Naive thymus-derived CD4-positive, alpha-beta T cell (primary cell): ENCODE measurements at regions of chr17 and their contacts with region 1.

Region 1: DNA sequence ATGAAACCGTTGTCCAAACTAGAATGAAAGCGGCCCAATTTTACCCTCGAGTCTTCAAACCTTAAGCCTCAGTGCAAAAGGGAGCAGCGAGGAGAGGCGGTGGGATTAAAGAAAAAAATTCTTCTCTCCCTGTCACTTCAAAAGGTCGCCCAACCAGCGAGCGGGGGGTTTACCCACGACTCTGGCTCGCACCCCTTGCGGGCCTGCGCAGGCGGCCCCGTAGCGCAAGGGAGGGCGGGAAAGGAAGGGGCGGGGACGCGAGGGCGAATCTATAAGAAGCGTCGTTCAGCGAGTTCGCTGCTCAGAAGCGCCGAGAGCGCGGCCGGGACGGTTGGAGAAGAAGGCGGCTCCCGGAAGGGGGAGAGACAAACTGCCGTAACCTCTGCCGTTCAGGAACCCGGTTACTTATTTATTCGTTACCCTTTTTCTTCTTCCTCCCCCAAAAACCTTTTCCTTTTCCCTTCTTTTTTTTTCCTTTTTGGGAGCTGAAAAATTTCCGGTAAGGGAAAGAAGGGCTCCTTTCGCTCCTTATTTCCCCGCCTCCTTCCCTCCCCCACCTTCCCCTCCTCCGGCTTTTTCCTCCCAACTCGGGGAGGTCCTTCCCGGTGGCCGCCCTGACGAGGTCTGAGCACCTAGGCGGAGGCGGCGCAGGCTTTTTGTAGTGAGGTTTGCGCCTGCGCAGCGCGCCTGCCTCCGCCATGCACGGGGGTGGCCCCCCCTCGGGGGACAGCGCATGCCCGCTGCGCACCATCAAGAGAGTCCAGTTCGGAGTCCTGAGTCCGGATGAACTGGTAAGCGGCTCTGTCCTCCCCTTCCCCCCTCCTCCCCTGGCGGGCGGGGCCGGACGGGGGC is at the start of gene POLR2A:
- DNase-seq: peak; percentile 97 to 99 (median 99)
- ATAC-seq: peak; percentile 80
- H3K4me3 ChIP-seq: peak within 1 kb of the TSS; percentile 100
- H3K4me3 Mint-ChIP-seq: peak within 1 kb of the TSS; percentile 86 to 100 (median 98)
- H3K27ac ChIP-seq: peak within 1 kb of the TSS; percentile 97
- H3K27ac Mint-ChIP-seq: peak within 1 kb of the TSS; percentile 99 to 100 (median 100)
- H3K4me1 ChIP-seq: peaks cover 38 to 55% of the 10 kb centered on the region in 2 donors
- H3K4me1 Mint-ChIP-seq: peaks cover 60 to 81% (median 72%) of the 10 kb centered on the region in 7 donors
- H3K27me3 ChIP-seq: no peaks in the 10 kb centered on the region
- H3K27me3 Mint-ChIP-seq: no peaks in the 10 kb centered on the region
- total RNA-seq, gene POLR2A: 165 to 501 (median 225) TPM

Region 2: DNA sequence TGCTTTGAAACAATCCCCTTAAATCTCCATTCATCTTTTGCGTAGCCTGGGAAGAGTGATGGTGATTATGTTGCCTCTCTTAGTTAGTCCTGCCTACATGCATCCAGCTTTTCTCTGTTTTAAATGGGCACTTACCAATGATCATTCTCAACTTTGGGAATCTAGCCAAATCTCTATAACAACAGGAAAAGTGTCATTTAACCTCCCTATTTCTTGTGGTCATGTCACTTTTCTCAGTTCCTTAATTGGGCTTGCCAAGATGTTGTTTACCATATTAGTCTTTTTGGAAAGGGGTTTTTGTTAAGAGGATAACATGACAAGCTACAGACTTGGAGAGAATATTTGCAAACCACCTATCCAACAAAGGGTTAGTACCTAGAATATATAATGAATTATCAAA is 388.7 kb before region 1 on chr17:
- CTCF ChIA-PET with region 1: no interaction called
- POLR2A ChIA-PET with region 1: no interaction called
- intact Hi-C with region 1: no loop called
- DNase-seq: no peak
- ATAC-seq: peak; percentile 38
- H3K4me3 ChIP-seq: no peak overlapping the region
- H3K4me3 Mint-ChIP-seq: no peak overlapping the region
- H3K27ac ChIP-seq: no peak overlapping the region
- H3K27ac Mint-ChIP-seq: peak overlapping the region in 1 of 9 donors; percentile 11
- H3K4me1 ChIP-seq: no peaks in the 10 kb centered on the region
- H3K4me1 Mint-ChIP-seq: peaks cover 0 to 17% (median 8%) of the 10 kb centered on the region in 7 donors
- H3K27me3 ChIP-seq: no peaks in the 10 kb centered on the region
- H3K27me3 Mint-ChIP-seq: peaks cover 0 to 11% (median 5%) of the 10 kb centered on the region in 5 donors

Region 3: GRCh38 chr17:7214300-7215135 is 269.8 kb before region 1 on chr17:
- CTCF ChIA-PET with region 1: no interaction called
- POLR2A ChIA-PET with region 1: interaction called, 4 read pairs
- intact Hi-C with region 1: loop called in 1 of 2 experiments (anchors 2 kb)
- DNase-seq: peak; percentile 96 to 99 (median 97)
- ATAC-seq: peak; percentile 90
- H3K4me3 ChIP-seq: peak overlapping the region; percentile 61
- H3K4me3 Mint-ChIP-seq: peak overlapping the region; percentile 76 to 97 (median 94)
- H3K27ac ChIP-seq: peak overlapping the region; percentile 97
- H3K27ac Mint-ChIP-seq: peak overlapping the region; percentile 90 to 100 (median 99)
- H3K4me1 ChIP-seq: peaks cover 25 to 49% of the 10 kb centered on the region in 2 donors
- H3K4me1 Mint-ChIP-seq: peaks cover 36 to 69% (median 65%) of the 10 kb centered on the region in 7 donors
- H3K27me3 ChIP-seq: no peaks in the 10 kb centered on the region
- H3K27me3 Mint-ChIP-seq: peaks cover 0 to 16% (median 0%) of the 10 kb centered on the region in 5 donors

Region 4: GRCh38 chr17:7351665-7352501 is 132.4 kb before region 1 on chr17 and contains the start of gene KCTD11:
- CTCF ChIA-PET with region 1: interaction called, 6 read pairs
- POLR2A ChIA-PET with region 1: interaction called, 14 read pairs
- intact Hi-C with region 1: loop called (anchors 1 to 10 kb)
- DNase-seq: peak; percentile 40 to 88 (median 58)
- ATAC-seq: peak; percentile 72
- H3K4me3 ChIP-seq: peak within 1 kb of the TSS; percentile 57
- H3K4me3 Mint-ChIP-seq: peak within 1 kb of the TSS; percentile 78 to 94 (median 88)
- H3K27ac ChIP-seq: peak within 1 kb of the TSS; percentile 74
- H3K27ac Mint-ChIP-seq: peak within 1 kb of the TSS; percentile 72 to 91 (median 86)
- H3K4me1 ChIP-seq: peaks cover 10 to 27% of the 10 kb centered on the region in 2 donors
- H3K4me1 Mint-ChIP-seq: peaks cover 14 to 62% (median 43%) of the 10 kb centered on the region in 7 donors
- H3K27me3 ChIP-seq: no peaks in the 10 kb centered on the region
- H3K27me3 Mint-ChIP-seq: no peaks in the 10 kb centered on the region
- total RNA-seq, gene KCTD11: 2.7 to 13.7 (median 4.0) TPM

Region 5: GRCh38 chr17:7444682-7445618 is 39.3 kb before region 1 on chr17 and contains the start of gene CHRNB1:
- CTCF ChIA-PET with region 1: interaction called, 3 read pairs
- POLR2A ChIA-PET with region 1: interaction called, 35 read pairs
- intact Hi-C with region 1: no loop called
- DNase-seq: peak in 2 of 9 donors; percentile 23 to 49
- ATAC-seq: peak; percentile 74
- H3K4me3 ChIP-seq: peak within 1 kb of the TSS; percentile 30
- H3K4me3 Mint-ChIP-seq: peak within 1 kb of the TSS; percentile 75 to 89 (median 84)
- H3K27ac ChIP-seq: no peak within 1 kb of the TSS
- H3K27ac Mint-ChIP-seq: peak within 1 kb of the TSS in 5 of 9 donors; percentile 26 to 90 (median 39)
- H3K4me1 ChIP-seq: peaks cover 4 to 28% of the 10 kb centered on the region in 2 donors
- H3K4me1 Mint-ChIP-seq: peaks cover 23 to 39% (median 32%) of the 10 kb centered on the region in 7 donors
- H3K27me3 ChIP-seq: peaks cover 9 to 34% of the 10 kb centered on the region in 2 donors
- H3K27me3 Mint-ChIP-seq: peaks cover 44 to 68% (median 58%) of the 10 kb centered on the region in 5 donors
- total RNA-seq, gene CHRNB1: 6.0 to 14.6 (median 7.2) TPM

Region 6: DNA sequence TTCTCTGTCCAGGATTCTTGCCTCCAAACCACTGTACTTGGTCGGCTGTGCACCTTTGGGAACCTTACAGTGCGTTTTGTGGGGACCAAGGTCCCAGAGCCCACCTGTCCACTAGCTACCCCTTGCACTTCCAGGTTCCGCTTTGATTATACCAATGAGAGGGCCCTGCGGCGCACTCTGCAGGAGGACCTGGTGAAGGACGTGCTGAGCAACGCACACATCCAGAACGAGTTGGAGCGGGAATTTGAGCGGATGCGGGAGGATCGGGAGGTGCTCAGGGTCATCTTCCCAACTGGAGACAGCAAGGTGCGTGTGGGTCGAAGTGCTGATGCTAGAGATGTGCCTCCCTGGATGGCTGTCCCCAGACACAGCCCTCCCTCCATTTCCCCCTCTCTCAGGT is 18.7 kb after region 1 on chr17:
- CTCF ChIA-PET with region 1: no interaction called
- POLR2A ChIA-PET with region 1: interaction called, 19 read pairs
- intact Hi-C with region 1: no loop called
- DNase-seq: peak in 2 of 9 donors; percentile 17 to 27
- ATAC-seq: peak; percentile 43
- H3K4me3 ChIP-seq: no peak overlapping the region
- H3K4me3 Mint-ChIP-seq: no peak overlapping the region
- H3K27ac ChIP-seq: no peak overlapping the region
- H3K27ac Mint-ChIP-seq: no peak overlapping the region
- H3K4me1 ChIP-seq: no peaks in the 10 kb centered on the region
- H3K4me1 Mint-ChIP-seq: peaks cover 0 to 3% (median 0%) of the 10 kb centered on the region in 7 donors
- H3K27me3 ChIP-seq: no peaks in the 10 kb centered on the region
- H3K27me3 Mint-ChIP-seq: no peaks in the 10 kb centered on the region

Region 7: GRCh38 chr17:7614422-7615264 is 130.3 kb after region 1 on chr17 and contains the start of gene FXR2:
- CTCF ChIA-PET with region 1: interaction called, 3 read pairs
- POLR2A ChIA-PET with region 1: interaction called, 4 read pairs
- intact Hi-C with region 1: loop called in 1 of 2 experiments (anchors 1 kb)
- DNase-seq: peak; percentile 96 to 100 (median 99)
- ATAC-seq: peak; percentile 93
- H3K4me3 ChIP-seq: peak within 1 kb of the TSS; percentile 86
- H3K4me3 Mint-ChIP-seq: peak within 1 kb of the TSS; percentile 85 to 97 (median 92)
- H3K27ac ChIP-seq: peak within 1 kb of the TSS; percentile 81
- H3K27ac Mint-ChIP-seq: peak within 1 kb of the TSS; percentile 89 to 99 (median 97)
- H3K4me1 ChIP-seq: peaks cover 16 to 27% of the 10 kb centered on the region in 2 donors
- H3K4me1 Mint-ChIP-seq: peaks cover 29 to 47% (median 40%) of the 10 kb centered on the region in 7 donors
- H3K27me3 ChIP-seq: no peaks in the 10 kb centered on the region
- H3K27me3 Mint-ChIP-seq: peaks cover 0 to 6% (median 0%) of the 10 kb centered on the region in 5 donors
- total RNA-seq, gene FXR2: 24.6 to 46.9 (median 34.0) TPM

Region 8: DNA sequence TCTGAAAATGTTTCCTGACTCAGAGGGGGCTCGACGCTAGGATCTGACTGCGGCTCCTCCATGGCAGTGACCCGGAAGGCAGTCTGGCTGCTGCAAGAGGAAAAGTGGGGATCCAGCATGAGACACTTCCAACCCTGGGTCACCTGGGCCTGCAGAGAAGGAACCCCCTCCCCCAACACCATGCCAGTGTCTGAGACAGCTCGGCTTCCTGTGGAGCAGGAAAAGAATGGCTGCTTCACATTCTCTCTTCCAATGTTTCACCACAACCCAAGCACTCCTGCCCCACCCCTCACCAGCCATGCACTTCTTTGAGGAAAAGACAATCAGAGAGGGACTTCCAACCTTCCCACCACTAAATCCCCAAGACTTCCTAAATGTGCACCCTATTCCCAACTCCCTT is 192.2 kb after region 1 on chr17:
- CTCF ChIA-PET with region 1: no interaction called
- POLR2A ChIA-PET with region 1: no interaction called
- intact Hi-C with region 1: no loop called
- DNase-seq: no peak
- ATAC-seq: no peak
- H3K4me3 ChIP-seq: no peak overlapping the region
- H3K4me3 Mint-ChIP-seq: no peak overlapping the region
- H3K27ac ChIP-seq: no peak overlapping the region
- H3K27ac Mint-ChIP-seq: peak overlapping the region in 3 of 9 donors; percentile 32 to 62 (median 36)
- H3K4me1 ChIP-seq: no peaks in the 10 kb centered on the region
- H3K4me1 Mint-ChIP-seq: peaks cover 7 to 15% (median 10%) of the 10 kb centered on the region in 7 donors
- H3K27me3 ChIP-seq: no peaks in the 10 kb centered on the region
- H3K27me3 Mint-ChIP-seq: no peaks in the 10 kb centered on the region

Region 9: GRCh38 chr17:8156246-8156992 is 672.1 kb after region 1 on chr17:
- CTCF ChIA-PET with region 1: no interaction called
- POLR2A ChIA-PET with region 1: interaction called, 4 read pairs
- intact Hi-C with region 1: loop called in 1 of 2 experiments (anchors 5 kb)
- DNase-seq: peak; percentile 96 to 100 (median 100)
- ATAC-seq: peak; percentile 83
- H3K4me3 ChIP-seq: peak overlapping the region; percentile 93
- H3K4me3 Mint-ChIP-seq: no peak overlapping the region
- H3K27ac ChIP-seq: peak overlapping the region; percentile 97
- H3K27ac Mint-ChIP-seq: no peak overlapping the region
- H3K4me1 ChIP-seq: peaks cover 58 to 75% of the 10 kb centered on the region in 2 donors
- H3K4me1 Mint-ChIP-seq: peaks cover 33 to 73% (median 65%) of the 10 kb centered on the region in 7 donors
- H3K27me3 ChIP-seq: no peaks in the 10 kb centered on the region
- H3K27me3 Mint-ChIP-seq: no peaks in the 10 kb centered on the region